Activated T-helper 1 cell treated with anti-CD3 and anti-CD28 coated beads, Interleukin-12 subunit alpha, Interleukin-12 subunit beta, Interleukin-2, Interleukin-4 antibody, amounts not matched to agents 30 ng/mL and 10 ng/mL and 1 ng/mL, durations not matched to agents 14 hours and 24 hours and 36 hours (primary cell): ENCODE measurements at regions of chrX and their contacts with region 1.

Region 1: GRCh38 chrX:23907498-23908218 is at the starts of genes APOO and CXorf58:
- DNase-seq: peak; percentile 88
- H3K4me3 Mint-ChIP-seq: peak within 1 kb of the TSS; percentile 85
- H3K27ac Mint-ChIP-seq: peak within 1 kb of the TSS; percentile 89
- H3K4me1 Mint-ChIP-seq: peaks cover 13% of the 10 kb centered on the region
- H3K27me3 Mint-ChIP-seq: no peaks in the 10 kb centered on the region
- total RNA-seq, gene APOO: 29.0 and 30.0 TPM in 2 replicates
- total RNA-seq, gene CXorf58: not detected in 2 replicates

Region 2: DNA sequence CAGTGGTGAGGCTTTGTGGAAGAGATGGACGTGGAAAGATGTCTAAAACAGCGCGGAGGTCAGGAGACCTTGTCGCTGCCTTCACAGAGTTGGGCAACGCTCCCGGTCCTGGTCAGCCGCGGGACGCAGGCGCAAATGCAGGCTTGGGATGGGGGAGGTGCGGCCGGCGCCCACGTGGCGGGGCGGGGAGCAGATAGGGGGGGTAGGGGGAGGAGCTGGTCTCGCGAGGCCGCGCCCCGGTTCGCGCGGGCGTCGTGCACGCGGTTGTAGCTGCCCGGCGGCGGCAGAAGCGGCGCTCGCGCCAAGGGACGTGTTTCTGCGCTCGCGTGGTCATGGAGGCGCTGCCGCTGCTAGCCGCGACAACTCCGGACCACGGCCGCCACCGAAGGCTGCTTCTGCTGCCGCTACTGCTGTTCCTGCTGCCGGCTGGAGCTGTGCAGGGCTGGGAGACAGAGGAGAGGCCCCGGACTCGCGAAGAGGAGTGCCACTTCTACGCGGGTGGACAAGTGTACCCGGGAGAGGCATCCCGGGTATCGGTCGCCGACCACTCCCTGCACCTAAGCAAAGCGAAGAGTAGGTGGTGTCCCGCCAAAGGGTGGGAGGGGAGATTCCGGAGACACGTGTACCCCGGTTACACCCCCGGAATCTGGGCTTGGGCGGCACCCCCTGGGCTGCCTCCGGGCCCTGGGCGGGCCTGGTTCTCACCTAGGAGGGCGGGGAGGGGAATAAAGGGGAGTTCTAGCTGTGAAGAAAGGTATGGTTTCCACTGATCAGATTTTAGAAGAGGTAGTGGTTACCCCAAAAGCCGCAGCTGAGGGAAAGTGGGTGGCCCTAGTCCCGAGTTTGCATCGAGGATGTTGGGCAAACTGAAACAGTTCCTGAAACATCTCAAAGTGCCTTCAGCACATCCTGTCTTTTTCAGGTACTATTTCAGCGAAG is 240.2 kb before region 1 on chrX and contains the start of gene PRDX4:
- intact Hi-C with region 1: loop called (anchors 10 kb)
- DNase-seq: peak; percentile 66
- H3K4me3 Mint-ChIP-seq: peak within 1 kb of the TSS; percentile 88
- H3K27ac Mint-ChIP-seq: peak within 1 kb of the TSS; percentile 94
- H3K4me1 Mint-ChIP-seq: peaks cover 37% of the 10 kb centered on the region
- H3K27me3 Mint-ChIP-seq: no peaks in the 10 kb centered on the region
- total RNA-seq, gene PRDX4: 75.5 and 83.2 TPM in 2 replicates

Region 3: DNA sequence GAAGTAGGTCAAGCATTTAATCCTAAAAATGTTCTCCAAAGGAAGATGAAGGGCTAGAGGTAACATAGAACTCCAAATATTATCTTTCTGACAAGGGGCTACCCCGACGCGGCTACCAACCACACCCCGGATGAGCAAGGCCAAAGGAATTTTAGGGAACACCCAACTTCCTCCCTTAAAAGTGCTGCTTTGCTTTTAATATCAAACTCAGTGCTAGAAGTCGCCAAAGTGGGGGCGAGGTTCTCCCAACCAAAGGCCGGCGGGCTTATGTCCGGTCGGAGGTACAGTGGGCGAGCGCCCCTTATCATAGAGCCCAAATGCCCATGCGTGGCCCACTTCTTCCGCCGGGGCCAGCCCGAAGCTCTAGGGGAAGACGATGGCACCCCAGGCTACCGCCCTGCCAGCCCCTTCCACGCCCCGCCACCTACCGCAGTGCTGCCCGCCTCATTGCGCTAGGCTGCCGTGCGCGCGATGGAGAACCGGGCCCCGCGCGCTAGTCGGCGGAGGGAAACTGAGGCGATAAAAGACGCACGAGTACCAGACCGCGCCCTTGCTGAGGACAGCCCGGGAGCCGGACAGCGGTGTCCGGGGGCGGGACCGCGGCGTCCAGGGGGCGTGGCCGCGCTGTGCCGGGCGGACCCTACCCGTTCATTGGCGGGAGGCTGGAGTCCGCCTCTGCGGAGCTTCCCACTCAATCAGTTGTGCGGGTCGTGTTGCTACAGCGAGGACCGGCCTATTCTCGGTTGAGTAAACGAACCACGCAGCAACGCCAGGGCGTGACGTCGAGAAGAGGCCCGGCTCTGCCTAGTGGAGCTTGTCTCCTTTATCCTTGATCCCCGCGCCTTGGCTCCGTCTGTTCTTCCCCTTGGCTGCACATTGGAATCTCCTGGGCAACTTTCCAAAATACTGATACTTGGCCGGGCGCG is 164.7 kb before region 1 on chrX and contains the start of gene ACOT9:
- intact Hi-C with region 1: loop called (anchors 1 kb)
- DNase-seq: peak; percentile 77
- H3K4me3 Mint-ChIP-seq: peak within 1 kb of the TSS; percentile 93
- H3K27ac Mint-ChIP-seq: peak within 1 kb of the TSS; percentile 92
- H3K4me1 Mint-ChIP-seq: peaks cover 29% of the 10 kb centered on the region
- H3K27me3 Mint-ChIP-seq: no peaks in the 10 kb centered on the region
- total RNA-seq, gene ACOT9: 58.3 and 60.3 TPM in 2 replicates

Region 4: DNA sequence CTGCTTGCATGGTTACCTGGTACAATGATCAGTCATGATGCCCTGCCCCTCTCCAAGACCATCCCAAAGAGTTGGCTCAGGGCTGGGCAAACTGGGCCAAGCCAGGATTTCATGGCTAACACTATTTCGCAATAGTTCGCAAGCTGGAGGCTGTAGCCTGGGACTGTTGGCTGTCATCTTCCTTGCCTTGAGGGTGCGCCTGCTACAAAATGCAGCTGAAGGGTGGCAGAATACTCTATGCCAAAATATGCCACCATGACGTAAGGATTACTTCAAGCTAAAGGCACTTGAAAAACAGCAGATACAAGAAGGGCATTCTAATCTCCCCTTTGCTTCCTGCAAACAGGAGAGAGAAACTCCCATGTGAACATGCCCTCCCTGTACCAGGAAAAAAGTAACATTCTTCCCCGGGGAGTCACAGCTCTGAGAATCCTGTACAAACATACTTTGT is 103.7 kb before region 1 on chrX:
- intact Hi-C with region 1: no loop called
- DNase-seq: no peak
- H3K4me3 Mint-ChIP-seq: no peak overlapping the region
- H3K27ac Mint-ChIP-seq: no peak overlapping the region
- H3K4me1 Mint-ChIP-seq: peaks cover 5% of the 10 kb centered on the region
- H3K27me3 Mint-ChIP-seq: no peaks in the 10 kb centered on the region

Region 5: GRCh38 chrX:23919706-23920320 is 12.2 kb after region 1 on chrX:
- intact Hi-C with region 1: no loop called
- DNase-seq: no peak
- H3K4me3 Mint-ChIP-seq: no peak overlapping the region
- H3K27ac Mint-ChIP-seq: no peak overlapping the region
- H3K4me1 Mint-ChIP-seq: peaks cover 7% of the 10 kb centered on the region
- H3K27me3 Mint-ChIP-seq: no peaks in the 10 kb centered on the region

Region 6: DNA sequence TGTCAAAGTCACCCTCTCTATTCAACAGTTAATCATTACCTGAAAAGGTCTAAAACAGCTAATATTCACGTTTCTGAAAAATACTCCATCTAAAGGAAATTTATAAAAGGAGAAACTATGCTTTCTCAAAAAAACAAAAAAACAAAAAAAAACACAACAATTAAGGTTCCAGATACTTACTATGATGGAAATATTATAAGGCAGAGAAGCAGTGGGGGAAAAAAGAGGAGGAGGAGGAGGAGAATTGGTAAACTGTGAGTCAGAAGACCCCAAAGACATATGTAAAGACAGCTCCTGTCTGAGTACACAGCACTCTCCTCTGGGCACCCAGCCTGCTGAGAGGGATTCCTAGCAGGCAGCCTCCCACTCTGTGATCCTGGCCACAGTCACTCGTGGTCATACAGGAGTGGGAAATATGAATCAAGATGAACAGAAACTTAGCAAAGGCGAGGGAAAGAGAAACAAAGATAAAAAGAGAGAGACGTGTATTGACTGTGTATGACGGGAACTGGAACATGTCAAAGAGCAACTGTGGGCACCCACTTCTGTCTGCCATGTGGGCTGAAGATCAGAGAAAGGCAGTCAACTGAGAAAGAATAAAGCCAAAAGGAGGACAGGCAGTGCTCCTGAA is 106.8 kb after region 1 on chrX:
- intact Hi-C with region 1: loop called (anchors 1 kb)
- DNase-seq: peak; percentile 21
- H3K4me3 Mint-ChIP-seq: peak overlapping the region; percentile 64
- H3K27ac Mint-ChIP-seq: peak overlapping the region; percentile 89
- H3K4me1 Mint-ChIP-seq: peaks cover 36% of the 10 kb centered on the region
- H3K27me3 Mint-ChIP-seq: no peaks in the 10 kb centered on the region

Region 7: GRCh38 chrX:24241822-24242648 is 334.4 kb after region 1 on chrX:
- intact Hi-C with region 1: loop called (anchors 5 kb)
- DNase-seq: no peak
- H3K4me3 Mint-ChIP-seq: no peak overlapping the region
- H3K27ac Mint-ChIP-seq: no peak overlapping the region
- H3K4me1 Mint-ChIP-seq: peaks cover 8% of the 10 kb centered on the region
- H3K27me3 Mint-ChIP-seq: peaks cover 2% of the 10 kb centered on the region

Region 8: DNA sequence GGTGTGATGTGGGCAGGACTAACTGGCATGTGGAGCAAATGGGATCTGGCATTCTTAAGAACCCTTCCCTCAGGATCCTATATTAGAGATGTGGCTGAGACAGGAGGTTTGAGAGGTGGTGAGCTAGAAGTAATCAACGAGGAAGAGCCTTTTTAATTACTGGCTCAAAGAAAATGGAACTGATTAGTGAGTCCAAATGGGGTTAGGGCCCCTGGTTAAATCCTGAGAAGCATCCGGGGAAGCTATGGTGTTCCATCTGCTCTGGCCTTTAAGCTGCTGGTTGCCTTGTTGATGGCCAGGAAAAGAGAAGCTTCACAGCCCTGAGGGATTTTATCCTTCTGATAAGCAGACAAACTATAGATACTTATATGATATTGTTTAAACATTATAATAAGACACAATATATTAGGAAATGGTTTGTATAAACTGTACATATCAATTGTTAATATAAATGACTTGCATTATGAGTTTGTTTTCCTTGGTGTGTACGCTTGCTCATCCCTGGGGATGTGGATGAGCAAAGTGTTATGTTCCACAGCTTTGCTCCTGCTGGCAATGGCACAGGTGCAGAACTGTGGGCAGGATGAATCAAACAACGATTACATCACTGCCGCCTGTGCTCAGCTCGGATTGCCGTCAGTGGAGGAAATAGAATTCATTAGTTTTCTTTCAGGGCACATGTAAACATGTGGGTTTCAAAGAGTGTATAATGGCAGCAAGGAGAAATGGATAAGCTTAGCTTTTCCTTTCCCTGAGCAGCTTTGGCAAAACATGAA is 1436.7 kb after region 1 on chrX:
- intact Hi-C with region 1: no loop called
- DNase-seq: no peak
- H3K4me3 Mint-ChIP-seq: no peak overlapping the region
- H3K27ac Mint-ChIP-seq: no peak overlapping the region
- H3K4me1 Mint-ChIP-seq: no peaks in the 10 kb centered on the region
- H3K27me3 Mint-ChIP-seq: no peaks in the 10 kb centered on the region